ENCODE measurements at regions of chr4 and their contacts with region 1.

Region 1: DNA sequence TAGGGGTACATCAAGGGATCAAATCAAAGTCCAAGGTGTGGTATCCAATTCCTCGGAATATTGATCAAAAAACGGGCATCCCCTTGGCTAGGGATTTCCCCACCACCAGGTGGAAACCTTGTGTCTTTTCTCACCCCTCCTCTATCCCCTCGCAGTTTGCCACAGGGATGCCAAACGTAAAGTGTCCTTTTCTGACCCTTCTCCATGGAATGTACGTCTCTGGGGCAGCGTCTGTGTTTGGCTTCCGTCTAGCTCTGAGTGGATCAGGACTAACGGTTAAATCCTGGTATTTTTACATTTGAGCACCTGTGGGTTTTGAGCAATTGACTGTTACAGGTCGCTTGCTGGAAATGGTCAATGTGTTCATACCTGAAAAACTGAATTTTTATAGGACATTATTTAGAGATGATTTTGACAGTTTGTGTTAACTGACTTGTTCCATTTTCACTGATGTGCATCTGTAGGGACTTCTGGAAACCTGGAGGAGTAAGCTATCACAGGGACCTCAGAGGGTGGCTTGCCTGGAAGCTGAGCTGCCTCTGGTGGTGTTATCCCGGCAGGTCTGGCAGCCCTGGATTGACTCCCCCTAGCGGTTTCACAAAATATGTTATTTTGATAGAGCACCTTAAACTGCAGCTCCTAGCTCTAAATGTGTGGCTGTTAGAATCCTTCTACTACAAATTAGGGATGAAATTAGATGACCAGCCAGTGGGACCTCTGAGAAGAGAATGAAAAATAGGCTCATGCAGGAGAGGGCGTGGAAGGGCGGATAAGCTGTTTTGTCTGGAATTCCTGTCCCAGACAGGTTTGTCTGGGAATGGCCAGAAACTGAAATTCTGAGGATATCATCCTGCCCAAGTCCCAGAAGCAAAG is 8.8 kb upstream of the MGST2 start:
- DNase-seq: peak; percentile 74
- ATAC-seq: peak; percentile 90
- H3K4me3 ChIP-seq: peak overlapping the region; percentile 26 to 39
- H3K27ac ChIP-seq: no peak overlapping the region
- H3K4me1 ChIP-seq: peaks cover 3 to 22% of the 10 kb centered on the region in 2 experiments; a peak in 3 of 4 replicates
- H3K27me3 ChIP-seq: no peaks in the 10 kb centered on the region
- CTCF ChIP-seq: peak; percentile 77 to 93 (median 92)
- POLR2A ChIP-seq: no peak
- RAD21 ChIP-seq: peak; percentile 72

Region 2: GRCh38 chr4:139042981-139043460 is 613.8 kb before region 1 on chr4:
- CTCF ChIA-PET with region 1: no interaction called
- POLR2A ChIA-PET with region 1: no interaction called
- RAD21 ChIA-PET with region 1: no interaction called
- intact Hi-C with region 1: no loop called
- DNase-seq: no peak
- ATAC-seq: no peak
- H3K4me3 ChIP-seq: no peak overlapping the region
- H3K27ac ChIP-seq: no peak overlapping the region
- H3K4me1 ChIP-seq: no peaks in the 10 kb centered on the region
- H3K27me3 ChIP-seq: no peaks in the 10 kb centered on the region
- CTCF ChIP-seq: no peak
- POLR2A ChIP-seq: no peak
- RAD21 ChIP-seq: no peak

Region 3: DNA sequence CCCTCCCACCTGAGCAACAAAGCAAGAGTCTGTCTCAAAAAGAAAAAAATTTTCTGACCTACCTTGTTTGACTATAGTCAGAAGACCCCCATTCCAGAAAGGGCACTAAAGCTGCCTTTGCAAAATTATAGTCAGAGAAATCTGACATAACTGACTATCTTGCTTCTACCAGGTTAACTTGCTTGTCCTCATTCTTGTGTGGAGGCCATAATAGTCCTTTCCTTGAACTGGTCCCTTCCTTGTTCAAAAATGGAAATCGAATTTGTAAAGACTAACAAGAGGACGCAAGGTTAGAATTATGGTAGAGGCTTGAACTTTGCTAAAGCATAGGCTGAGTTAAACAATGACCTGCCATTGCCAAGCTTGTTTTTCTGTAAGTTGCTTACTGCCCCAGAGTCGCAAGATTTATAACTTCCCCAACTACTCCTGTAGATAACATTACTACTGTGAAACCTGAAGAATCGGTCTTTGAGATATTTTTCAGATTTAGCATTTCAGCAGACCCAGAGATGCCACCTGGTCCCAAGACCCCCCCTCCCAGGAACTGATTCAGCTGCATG is 157.7 kb before region 1 on chr4:
- CTCF ChIA-PET with region 1: interaction called, 5 read pairs
- POLR2A ChIA-PET with region 1: no interaction called
- RAD21 ChIA-PET with region 1: no interaction called
- intact Hi-C with region 1: loop called (anchors 5 kb)
- DNase-seq: no peak
- ATAC-seq: no peak
- H3K4me3 ChIP-seq: no peak overlapping the region
- H3K27ac ChIP-seq: no peak overlapping the region
- H3K4me1 ChIP-seq: no peaks in the 10 kb centered on the region
- H3K27me3 ChIP-seq: no peaks in the 10 kb centered on the region
- CTCF ChIP-seq: no peak
- POLR2A ChIP-seq: no peak
- RAD21 ChIP-seq: no peak

Region 4: GRCh38 chr4:139808808-139809756 is 152.2 kb after region 1 on chr4:
- CTCF ChIA-PET with region 1: no interaction called
- POLR2A ChIA-PET with region 1: no interaction called
- RAD21 ChIA-PET with region 1: no interaction called
- intact Hi-C with region 1: no loop called
- DNase-seq: no peak
- ATAC-seq: no peak
- H3K4me3 ChIP-seq: no peak overlapping the region
- H3K27ac ChIP-seq: no peak overlapping the region
- H3K4me1 ChIP-seq: no peaks in the 10 kb centered on the region
- H3K27me3 ChIP-seq: no peaks in the 10 kb centered on the region
- CTCF ChIP-seq: no peak
- POLR2A ChIP-seq: no peak
- RAD21 ChIP-seq: no peak

Region 5: GRCh38 chr4:140049024-140049848 is 392.4 kb after region 1 on chr4:
- CTCF ChIA-PET with region 1: interaction called, 8 read pairs
- POLR2A ChIA-PET with region 1: no interaction called
- RAD21 ChIA-PET with region 1: no interaction called
- intact Hi-C with region 1: loop called (anchors 5 kb)
- DNase-seq: no peak
- ATAC-seq: no peak
- H3K4me3 ChIP-seq: no peak overlapping the region
- H3K27ac ChIP-seq: no peak overlapping the region
- H3K4me1 ChIP-seq: peaks cover 0 to 6% of the 10 kb centered on the region in 2 experiments; a peak in 1 of 4 replicates
- H3K27me3 ChIP-seq: peaks cover 8% of the 10 kb centered on the region; the same call in 1 of the 2 replicates
- CTCF ChIP-seq: no peak
- POLR2A ChIP-seq: no peak
- RAD21 ChIP-seq: no peak

Region 6: DNA sequence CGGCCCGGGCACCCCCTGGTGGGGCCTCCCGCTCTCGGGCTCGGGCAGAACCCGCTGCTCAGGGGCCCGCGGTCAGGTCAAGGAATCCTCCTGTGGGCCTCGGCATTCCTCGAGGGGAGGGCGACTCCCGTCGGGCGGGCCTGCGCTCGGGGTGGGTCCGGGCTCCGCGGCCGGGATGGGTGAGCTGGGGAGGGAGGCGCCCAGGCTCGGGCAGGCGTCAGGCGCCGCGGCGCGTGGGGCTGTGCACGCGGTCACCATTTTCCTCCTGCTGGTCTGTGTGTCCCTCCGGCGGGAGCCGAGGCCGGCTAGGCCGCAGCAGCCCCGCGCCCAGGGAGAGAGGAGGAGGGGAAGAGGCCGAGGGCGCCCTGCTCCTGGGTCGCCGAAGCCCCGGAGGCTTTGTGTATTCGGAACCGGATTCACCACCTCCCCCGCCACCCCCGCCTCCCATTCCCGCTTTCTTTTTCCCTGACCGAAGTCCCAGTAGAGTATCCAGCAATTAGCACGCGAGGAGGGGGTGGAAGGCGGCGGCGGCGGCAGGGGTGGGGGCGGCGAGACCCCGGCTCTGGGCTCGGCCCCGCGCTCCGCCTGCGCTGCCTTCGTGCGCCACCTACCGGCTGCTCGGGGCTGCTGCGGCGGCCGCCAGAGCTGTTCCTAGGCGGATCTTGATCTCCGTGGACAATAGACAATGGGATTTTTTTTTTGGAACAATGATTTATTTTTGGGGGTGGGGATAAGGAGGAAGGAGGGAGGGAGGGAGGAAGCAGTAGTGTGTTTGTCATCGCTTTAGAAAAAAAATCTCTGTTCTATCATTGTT is 596.1 kb after region 1 on chr4:
- CTCF ChIA-PET with region 1: interaction called, 18 read pairs
- POLR2A ChIA-PET with region 1: no interaction called
- RAD21 ChIA-PET with region 1: no interaction called
- intact Hi-C with region 1: loop called (anchors 5 kb)
- DNase-seq: peak; percentile 43
- ATAC-seq: peak; percentile 85
- H3K4me3 ChIP-seq: peak overlapping the region; percentile 43 to 56
- H3K27ac ChIP-seq: peak overlapping the region; percentile 51; the same call in 1 of the 2 replicates
- H3K4me1 ChIP-seq: peaks cover 2 to 47% of the 10 kb centered on the region in 2 experiments; a peak in 3 of 4 replicates
- H3K27me3 ChIP-seq: no peaks in the 10 kb centered on the region
- CTCF ChIP-seq: peak; percentile 53 to 92 (median 76); a peak in 5 of 6 replicates
- POLR2A ChIP-seq: no peak
- RAD21 ChIP-seq: peak; percentile 85

Region 7: DNA sequence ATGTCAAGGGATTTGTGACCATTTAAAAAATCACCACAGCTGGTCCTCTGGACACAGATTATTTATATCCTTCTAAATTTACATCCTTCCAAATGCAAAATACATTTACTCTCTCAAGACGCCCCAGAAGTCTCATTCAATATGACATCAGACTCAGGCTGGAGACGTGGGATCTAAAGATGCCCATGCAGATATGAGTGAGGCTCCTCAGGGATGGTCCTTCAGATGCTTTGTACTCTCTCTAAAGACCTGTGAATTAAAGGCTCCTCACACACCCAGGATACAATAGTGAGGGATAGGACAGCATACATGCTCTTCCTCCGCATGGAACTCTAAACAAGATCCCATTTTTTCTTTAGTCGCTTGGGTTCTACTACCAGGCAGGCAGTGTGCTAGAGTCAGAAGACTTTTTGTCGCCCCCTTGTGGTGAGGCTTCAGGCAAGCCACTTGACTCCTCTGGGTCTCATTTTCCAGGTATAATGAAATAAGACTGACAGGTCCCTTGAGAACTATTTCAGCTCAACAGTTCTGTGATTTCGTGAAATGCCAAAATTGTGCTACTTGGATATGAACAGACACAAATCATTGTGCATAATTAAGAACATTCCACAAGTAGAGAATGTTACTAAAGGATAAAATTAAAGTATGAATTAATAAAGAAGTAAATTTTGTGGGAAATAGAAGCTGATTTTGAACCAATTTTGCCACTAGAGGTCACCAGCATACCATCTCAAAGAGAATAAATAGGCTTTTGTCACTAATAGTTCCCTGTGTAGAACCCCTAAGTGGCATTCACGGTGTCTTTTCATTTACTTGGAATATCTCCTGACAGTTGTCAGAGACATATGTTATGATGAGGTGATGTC is 702.9 kb after region 1 on chr4:
- CTCF ChIA-PET with region 1: interaction called, 20 read pairs
- POLR2A ChIA-PET with region 1: no interaction called
- RAD21 ChIA-PET with region 1: no interaction called
- intact Hi-C with region 1: loop called (anchors 2 kb)
- DNase-seq: peak; percentile 83
- ATAC-seq: peak; percentile 99
- H3K4me3 ChIP-seq: no peak overlapping the region
- H3K27ac ChIP-seq: no peak overlapping the region
- H3K4me1 ChIP-seq: no peaks in the 10 kb centered on the region
- H3K27me3 ChIP-seq: no peaks in the 10 kb centered on the region
- CTCF ChIP-seq: peak; percentile 87 to 97 (median 93)
- POLR2A ChIP-seq: no peak
- RAD21 ChIP-seq: peak; percentile 64

Measured in HCT116 (cell line).